ENCODE measurements at regions of chr20 and their contacts with region 1.

Region 1: GRCh38 chr20:986733-987355 is 15.3 kb downstream of the RSPO4 start:
- DNase-seq: no peak
- ATAC-seq: no peak
- H3K4me3 ChIP-seq: no peak overlapping the region
- H3K27ac ChIP-seq: no peak overlapping the region
- H3K4me1 ChIP-seq: no peaks in the 10 kb centered on the region
- H3K27me3 ChIP-seq: peaks cover 8 to 13% (median 10%) of the 10 kb centered on the region in 3 donors
- CTCF ChIP-seq: no peak
- POLR2A ChIP-seq: no peak

Region 2: DNA sequence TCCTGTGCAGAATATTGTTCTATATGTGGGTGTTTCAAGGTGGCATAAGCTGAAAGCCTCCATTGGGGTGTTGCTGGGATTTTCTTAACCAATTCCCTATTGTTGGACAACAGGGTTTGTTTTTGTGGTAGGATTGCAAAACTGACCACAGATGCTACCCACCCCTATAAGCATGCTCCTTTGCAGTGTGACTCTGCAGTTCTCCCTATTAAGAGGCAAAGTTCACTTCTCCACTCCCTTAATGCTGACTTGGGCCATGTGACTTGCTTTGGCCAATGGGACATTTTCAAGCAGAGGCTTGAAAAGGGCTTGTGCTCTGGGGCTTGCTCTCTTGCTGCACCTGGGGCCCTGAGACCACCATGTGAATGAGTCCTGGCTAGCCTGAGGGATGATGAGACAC is 62.2 kb before region 1 on chr20:
- in situ Hi-C with region 1: no loop called
- intact Hi-C with region 1: loop called (anchors 10 kb)
- DNase-seq: no peak
- ATAC-seq: no peak
- H3K4me3 ChIP-seq: no peak overlapping the region
- H3K27ac ChIP-seq: no peak overlapping the region
- H3K4me1 ChIP-seq: no peaks in the 10 kb centered on the region
- H3K27me3 ChIP-seq: no peaks in the 10 kb centered on the region
- CTCF ChIP-seq: no peak
- POLR2A ChIP-seq: no peak

Measured in gastrocnemius medialis (tissue), 4 donors.